ENCODE measurements at regions of chr7 and their contacts with region 1.

Region 1: DNA sequence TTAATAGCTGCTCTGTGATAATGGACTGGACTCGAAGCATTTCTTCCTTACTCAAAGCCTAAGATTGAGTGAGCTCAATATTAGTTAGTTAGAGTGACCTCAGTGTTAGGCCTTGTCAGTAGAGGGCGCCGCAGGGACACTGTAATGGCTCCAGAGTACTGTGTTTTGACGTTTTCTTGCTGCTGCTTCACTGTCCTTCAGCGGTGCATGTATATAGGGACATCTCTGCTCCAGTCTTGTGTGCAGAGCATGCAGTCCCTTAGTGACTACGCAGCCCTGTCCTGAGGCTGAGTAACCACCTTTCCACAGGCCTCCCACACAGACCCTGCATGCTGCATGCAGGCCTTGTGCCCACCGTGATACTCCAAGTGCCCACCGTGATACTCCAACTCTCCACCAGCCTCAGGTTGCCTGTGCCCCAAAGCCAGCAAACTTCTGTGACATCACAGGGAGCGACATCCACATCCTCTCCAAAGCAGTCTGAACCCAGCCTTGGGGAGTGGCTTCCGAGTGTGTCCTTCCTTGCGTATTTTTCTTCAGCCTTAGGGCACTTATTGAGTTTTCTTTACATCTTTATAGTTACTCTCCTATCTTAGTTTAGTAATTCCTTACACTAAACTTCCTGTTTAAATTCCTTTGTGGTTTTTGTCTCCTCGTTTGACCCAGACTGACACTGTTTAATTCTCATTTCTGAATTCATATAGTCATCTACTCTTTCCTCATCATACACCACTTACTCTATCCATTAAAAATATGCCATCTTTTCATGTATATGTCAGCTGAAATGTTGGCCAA is 118.2 kb downstream of the JAZF1 start:
- DNase-seq: peak; percentile 64

Region 2: GRCh38 chr7:28078036-28078901 is 15.9 kb after region 1 on chr7:
- CTCF ChIA-PET with region 1: interaction called, 31 read pairs
- POLR2A ChIA-PET with region 1: interaction called, 4 read pairs
- DNase-seq: peak; percentile 60

Region 3: DNA sequence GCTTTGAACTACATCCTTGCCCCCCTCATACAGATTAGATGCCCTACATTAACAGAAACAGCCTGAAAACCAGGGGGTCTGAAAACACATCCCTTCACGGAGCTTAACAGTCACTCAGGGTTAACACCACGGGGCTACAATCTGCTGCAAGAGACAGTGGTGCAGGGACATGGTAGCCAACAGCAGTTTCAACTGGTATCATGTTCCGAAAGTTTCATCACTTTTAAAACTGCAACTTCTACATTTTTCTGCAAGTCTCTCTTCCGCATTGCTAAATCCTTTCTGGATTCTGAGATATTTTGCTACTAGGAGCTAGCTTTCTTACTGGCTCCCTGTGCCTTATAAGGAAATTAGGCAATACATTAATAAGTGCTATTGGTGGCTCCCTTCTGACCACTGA is 25.6 kb after region 1 on chr7:
- CTCF ChIA-PET with region 1: interaction called, 24 read pairs
- POLR2A ChIA-PET with region 1: no interaction called
- DNase-seq: no peak

Region 4: DNA sequence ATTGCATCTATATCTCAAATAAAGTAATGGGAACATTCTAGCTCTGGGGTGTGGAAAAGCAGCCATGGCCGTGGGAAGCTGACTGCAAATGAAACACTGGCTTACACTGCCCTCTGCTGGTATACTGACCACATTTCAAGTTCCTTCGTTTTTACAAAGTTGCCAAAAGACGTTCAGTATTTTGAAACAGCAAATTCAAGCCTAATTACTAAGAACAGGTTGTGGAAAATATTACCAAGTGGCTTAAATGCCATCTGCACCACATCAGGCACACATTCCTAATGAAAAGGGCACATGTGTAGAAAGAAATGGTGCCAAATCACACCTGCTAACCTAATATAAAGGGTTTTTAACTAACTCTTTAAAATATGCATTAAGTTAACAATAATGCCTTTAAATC is 34.3 kb after region 1 on chr7:
- CTCF ChIA-PET with region 1: interaction called, 24 read pairs
- POLR2A ChIA-PET with region 1: no interaction called
- DNase-seq: peak; percentile 71

Measured in HEK293T (cell line).